Activated CD4-positive, alpha-beta memory T cell treated with anti-CD3 and anti-CD28 coated beads for 36 hours (primary cell): ENCODE measurements at regions of chr1 and their contacts with region 1.

Region 1: DNA sequence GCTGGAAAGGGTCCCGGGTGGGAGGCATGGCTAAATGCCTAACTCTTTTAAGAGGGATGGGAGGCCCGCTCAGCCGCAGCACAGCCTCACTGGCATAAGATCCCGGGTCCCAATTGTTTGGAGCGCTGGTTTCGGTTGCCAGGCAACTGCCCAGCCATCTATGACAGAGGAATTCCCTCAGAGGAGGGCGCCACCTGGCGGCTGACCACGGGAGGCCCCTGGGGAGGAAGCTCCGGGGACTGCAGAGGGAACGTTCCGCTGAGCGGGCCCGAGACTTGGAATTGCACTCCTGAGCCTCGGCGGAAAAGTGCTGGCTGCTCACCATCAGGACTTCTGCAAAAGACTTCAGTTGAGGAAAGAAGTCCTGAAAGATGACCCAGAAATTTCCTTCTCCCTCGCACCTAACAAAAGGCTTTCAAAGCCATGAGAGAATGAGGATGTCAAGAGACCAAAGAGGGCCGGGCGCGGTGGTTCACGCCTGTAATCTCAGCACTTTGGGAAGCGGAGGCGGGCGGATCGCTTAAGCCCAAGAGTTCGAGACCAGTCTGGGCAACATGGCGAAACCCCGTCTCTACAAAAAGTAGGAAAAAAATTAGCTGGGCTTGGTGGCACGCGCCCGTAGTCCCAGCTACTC is 1.1 kb upstream of the ELAPOR1 start:
- DNase-seq: peak; percentile 93
- H3K4me3 Mint-ChIP-seq: peak overlapping the region; percentile 80
- H3K27ac Mint-ChIP-seq: no peak overlapping the region
- H3K4me1 Mint-ChIP-seq: peaks cover 37% of the 10 kb centered on the region
- H3K27me3 Mint-ChIP-seq: no peaks in the 10 kb centered on the region

Region 2: DNA sequence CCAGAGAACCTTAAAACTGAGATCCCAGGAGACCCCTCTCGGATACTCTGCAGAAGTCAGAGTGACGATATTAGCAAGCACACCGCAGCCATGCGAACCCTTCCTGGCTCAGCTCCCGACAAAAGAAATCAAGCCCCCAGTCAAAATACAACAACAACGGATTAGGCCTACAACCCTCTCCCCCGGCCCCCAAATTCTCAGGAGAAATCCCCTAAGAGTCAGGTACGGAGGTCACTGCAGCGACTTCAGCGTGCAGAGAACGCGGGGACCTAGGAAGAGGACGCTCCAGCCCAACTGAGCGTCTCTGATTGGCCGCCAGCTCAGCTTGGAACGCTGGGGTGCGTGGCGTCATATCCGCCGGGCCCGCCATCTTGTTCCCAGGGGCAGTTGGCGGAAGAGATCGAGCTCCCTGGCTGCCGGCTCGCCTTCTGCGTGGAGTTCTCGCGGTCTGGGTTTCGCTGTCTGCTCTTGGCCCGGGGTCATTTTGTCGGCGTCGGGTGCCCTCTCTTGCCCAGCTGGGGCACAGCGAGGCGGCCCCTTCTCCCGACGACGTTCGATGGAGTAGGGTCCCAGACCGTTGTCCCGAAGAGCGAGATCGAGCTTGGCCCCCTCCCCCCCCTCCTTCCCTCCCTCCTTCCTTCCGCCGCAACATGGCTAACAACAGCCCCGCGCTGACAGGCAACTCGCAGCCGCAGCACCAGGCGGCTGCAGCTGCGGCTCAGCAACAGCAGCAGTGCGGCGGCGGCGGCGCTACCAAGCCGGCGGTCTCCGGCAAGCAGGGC is 420.6 kb before region 1 on chr1 and contains the start of gene PRPF38B:
- CTCF ChIA-PET with region 1: no interaction called
- POLR2A ChIA-PET with region 1: no interaction called
- intact Hi-C with region 1: loop called (anchors 2 kb)
- DNase-seq: peak; percentile 97
- H3K4me3 Mint-ChIP-seq: peak within 1 kb of the TSS; percentile 96
- H3K27ac Mint-ChIP-seq: peak within 1 kb of the TSS; percentile 99
- H3K4me1 Mint-ChIP-seq: peaks cover 37% of the 10 kb centered on the region
- H3K27me3 Mint-ChIP-seq: no peaks in the 10 kb centered on the region
- total RNA-seq, gene PRPF38B: 57.0 to 63.5 TPM

Region 3: DNA sequence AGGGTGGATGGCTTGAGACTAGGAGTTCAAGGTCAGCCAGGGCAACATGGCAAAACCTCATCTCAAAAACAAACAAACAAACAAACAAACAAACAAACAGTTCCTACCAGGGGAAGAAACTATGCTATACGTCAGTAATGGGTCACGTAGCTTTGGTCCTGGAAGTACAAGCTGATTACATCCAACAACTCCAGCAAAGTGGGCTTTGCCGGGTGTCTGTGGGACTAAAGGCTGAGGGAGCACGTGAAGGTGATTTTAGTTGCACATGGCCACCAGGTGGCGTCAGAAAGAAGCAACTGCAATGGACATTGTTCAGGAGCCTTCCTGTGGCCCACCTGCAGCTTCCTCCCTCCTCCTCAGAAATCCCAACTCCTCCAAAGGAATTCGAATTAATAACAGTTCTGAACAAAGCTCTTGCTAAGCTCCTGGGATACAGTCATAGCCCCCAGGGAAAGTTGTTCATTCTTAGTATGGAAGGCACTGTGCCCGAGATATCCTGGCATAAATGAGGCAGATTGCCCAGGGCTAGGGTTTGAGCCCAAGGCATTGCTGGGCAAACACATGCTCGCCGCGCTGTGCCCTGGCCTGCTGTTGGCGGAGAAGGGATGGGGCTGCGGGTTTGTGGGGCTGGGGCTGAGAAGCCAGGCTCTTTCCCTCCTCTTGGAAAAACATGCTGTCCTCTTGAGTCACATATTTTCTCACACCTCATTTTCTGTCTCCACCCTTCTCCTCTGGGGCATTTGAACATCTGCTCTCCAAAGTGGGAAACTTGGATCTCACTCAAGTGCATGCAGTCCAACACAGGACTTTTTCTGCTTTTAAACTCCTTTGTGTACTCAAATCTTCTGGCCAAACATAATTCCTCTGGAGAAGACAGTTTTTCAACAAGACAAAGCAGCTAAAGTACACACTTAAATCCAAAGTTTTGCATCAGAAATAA is 284.5 kb before region 1 on chr1:
- CTCF ChIA-PET with region 1: interaction called, 15 read pairs
- POLR2A ChIA-PET with region 1: no interaction called
- intact Hi-C with region 1: loop called (anchors 1 kb)
- DNase-seq: peak; percentile 81
- H3K4me3 Mint-ChIP-seq: no peak overlapping the region
- H3K27ac Mint-ChIP-seq: no peak overlapping the region
- H3K4me1 Mint-ChIP-seq: no peaks in the 10 kb centered on the region
- H3K27me3 Mint-ChIP-seq: no peaks in the 10 kb centered on the region

Region 4: DNA sequence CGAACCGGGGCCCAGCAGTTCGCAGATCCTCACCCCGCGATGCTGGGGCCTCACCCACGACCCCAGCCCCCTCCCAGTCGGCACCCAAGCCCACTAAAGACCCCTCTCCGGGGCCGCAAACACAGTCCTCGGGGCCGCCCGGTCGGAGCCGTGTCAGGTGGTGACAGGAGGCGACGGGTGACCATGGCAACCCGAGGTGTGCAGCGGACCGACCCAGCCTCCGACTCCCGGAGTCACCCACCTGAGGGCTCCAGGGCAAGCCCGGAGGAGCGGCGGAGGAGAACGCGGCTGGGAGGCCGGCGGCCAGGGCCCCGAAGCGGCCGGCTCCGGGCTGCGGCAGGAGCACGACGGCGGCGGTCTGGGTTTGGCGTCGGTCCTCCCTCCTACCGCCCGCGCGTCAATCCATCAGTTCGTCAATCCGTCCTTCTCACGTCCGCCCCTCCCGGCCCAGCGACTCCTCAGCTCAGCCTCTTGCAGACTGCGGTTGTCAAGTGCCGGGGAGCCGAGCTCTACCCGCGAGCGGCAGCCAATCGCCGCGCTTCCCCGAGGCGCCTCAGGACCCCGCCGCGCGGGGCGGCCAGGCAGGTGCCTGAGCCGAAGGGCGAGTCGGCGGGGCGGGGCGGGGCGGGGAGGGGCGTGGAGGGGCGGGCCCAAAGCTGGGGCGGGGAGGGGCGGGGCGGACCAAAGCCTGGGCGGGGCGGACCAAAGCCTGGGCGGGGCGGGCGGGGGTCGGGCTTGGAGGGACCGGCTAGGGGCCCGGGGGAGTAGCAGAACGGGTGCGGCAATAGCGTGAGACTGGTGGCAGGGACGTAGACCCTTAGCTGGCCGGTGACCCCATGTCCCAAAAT is 70.9 kb before region 1 on chr1 and contains the start of gene WDR47:
- CTCF ChIA-PET with region 1: interaction called, 5 read pairs
- POLR2A ChIA-PET with region 1: no interaction called
- intact Hi-C with region 1: loop called (anchors 1 kb)
- DNase-seq: peak; percentile 97
- H3K4me3 Mint-ChIP-seq: peak within 1 kb of the TSS; percentile 84
- H3K27ac Mint-ChIP-seq: peak within 1 kb of the TSS; percentile 76
- H3K4me1 Mint-ChIP-seq: peaks cover 12% of the 10 kb centered on the region
- H3K27me3 Mint-ChIP-seq: no peaks in the 10 kb centered on the region
- total RNA-seq, gene WDR47: 10.1 to 11.4 TPM

Region 5: GRCh38 chr1:109090196-109091077 is 22.3 kb before region 1 on chr1 and contains the start of gene TMEM167B:
- CTCF ChIA-PET with region 1: interaction called, 35 read pairs
- POLR2A ChIA-PET with region 1: interaction called, 4 read pairs
- intact Hi-C with region 1: loop called (anchors 1 kb)
- DNase-seq: peak; percentile 94
- H3K4me3 Mint-ChIP-seq: peak within 1 kb of the TSS; percentile 88
- H3K27ac Mint-ChIP-seq: peak within 1 kb of the TSS; percentile 92
- H3K4me1 Mint-ChIP-seq: peaks cover 28% of the 10 kb centered on the region
- H3K27me3 Mint-ChIP-seq: no peaks in the 10 kb centered on the region
- total RNA-seq, gene TMEM167B: 31.9 to 32.6 TPM

Region 6: DNA sequence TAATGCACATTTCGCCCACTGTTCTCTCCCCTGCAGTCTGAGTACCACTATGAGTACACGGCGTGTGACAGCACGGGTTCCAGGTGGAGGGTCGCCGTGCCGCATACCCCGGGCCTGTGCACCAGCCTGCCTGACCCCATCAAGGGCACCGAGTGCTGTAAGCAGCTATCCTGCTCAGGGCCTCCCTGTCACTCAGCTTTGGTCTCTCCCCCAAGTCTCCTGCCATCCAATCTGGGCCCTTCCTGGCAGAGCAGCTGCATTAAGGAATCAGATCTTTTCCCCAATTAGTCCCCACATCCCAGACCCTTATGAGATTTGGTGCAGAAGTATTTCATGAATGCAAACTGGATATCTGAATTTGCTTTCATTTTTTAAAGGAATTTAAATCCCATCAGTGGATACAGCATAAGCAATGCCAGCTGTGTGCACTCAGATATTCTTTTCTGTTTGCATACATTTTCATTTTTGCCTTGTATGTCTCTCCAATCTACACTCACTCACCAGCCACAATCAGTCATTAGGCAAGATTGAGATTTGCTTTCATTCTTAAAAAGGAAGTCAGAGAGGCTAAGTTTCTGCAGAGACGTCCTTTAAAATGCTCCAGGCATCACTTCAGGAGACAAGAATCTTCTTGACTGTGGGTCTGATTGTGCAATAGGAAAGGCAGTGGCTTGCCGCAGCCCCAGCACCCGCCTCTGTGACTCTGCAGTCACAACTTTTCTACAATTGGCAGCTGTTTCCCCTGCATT is 49.3 kb after region 1 on chr1:
- CTCF ChIA-PET with region 1: interaction called, 7 read pairs
- POLR2A ChIA-PET with region 1: no interaction called
- intact Hi-C with region 1: loop called (anchors 2 kb)
- DNase-seq: peak; percentile 68
- H3K4me3 Mint-ChIP-seq: no peak overlapping the region
- H3K27ac Mint-ChIP-seq: peak overlapping the region; percentile 1
- H3K4me1 Mint-ChIP-seq: peaks cover 21% of the 10 kb centered on the region
- H3K27me3 Mint-ChIP-seq: no peaks in the 10 kb centered on the region